HEK293 (cell line): ENCODE measurements at regions of chr15 and their contacts with region 1.

Region 1: GRCh38 chr15:79339564-79340314 is 28.8 kb downstream of the TMED3 start:
- H3K4me3 ChIP-seq: no peak overlapping the region
- H3K27ac ChIP-seq: no peak overlapping the region
- H3K4me1 ChIP-seq: no peaks in the 10 kb centered on the region
- CTCF ChIP-seq: peak; percentile 58; the same call in 1 of the 2 replicates

Region 2: GRCh38 chr15:79243723-79244122 is 96.0 kb before region 1 on chr15:
- CTCF ChIA-PET with region 1: no interaction called
- POLR2A ChIA-PET with region 1: no interaction called
- H3K4me3 ChIP-seq: no peak overlapping the region
- H3K27ac ChIP-seq: no peak overlapping the region
- H3K4me1 ChIP-seq: no peaks in the 10 kb centered on the region
- CTCF ChIP-seq: no peak

Region 3: DNA sequence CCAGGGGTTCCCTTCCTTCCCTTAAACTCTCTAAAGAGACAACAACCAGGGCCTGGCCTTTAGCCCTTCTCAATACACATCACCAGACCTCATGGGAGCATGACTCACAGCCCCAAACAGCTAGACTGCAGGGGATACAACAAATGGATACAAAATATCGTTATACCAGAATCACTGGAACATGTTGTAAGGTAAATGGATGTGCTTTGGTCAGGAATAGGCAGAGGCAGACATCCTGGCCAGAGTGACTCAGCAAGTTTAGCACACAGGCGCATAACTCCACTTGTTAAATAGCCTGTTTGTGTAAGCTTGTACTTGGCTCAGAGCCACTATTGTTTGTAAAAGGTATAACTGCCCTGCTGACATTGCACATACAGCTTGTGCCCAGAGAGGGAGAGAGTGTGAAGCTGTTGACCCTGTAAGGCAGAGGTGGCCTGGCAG is 10.5 kb before region 1 on chr15:
- CTCF ChIA-PET with region 1: interaction called, 16 read pairs
- POLR2A ChIA-PET with region 1: no interaction called
- H3K4me3 ChIP-seq: no peak overlapping the region
- H3K27ac ChIP-seq: no peak overlapping the region
- H3K4me1 ChIP-seq: no peaks in the 10 kb centered on the region
- CTCF ChIP-seq: no peak

Region 4: GRCh38 chr15:79442911-79443310 is 103.2 kb after region 1 on chr15:
- CTCF ChIA-PET with region 1: interaction called, 11 read pairs
- POLR2A ChIA-PET with region 1: no interaction called
- H3K4me3 ChIP-seq: no peak overlapping the region
- H3K27ac ChIP-seq: no peak overlapping the region
- H3K4me1 ChIP-seq: no peaks in the 10 kb centered on the region
- CTCF ChIP-seq: no peak

Region 5: DNA sequence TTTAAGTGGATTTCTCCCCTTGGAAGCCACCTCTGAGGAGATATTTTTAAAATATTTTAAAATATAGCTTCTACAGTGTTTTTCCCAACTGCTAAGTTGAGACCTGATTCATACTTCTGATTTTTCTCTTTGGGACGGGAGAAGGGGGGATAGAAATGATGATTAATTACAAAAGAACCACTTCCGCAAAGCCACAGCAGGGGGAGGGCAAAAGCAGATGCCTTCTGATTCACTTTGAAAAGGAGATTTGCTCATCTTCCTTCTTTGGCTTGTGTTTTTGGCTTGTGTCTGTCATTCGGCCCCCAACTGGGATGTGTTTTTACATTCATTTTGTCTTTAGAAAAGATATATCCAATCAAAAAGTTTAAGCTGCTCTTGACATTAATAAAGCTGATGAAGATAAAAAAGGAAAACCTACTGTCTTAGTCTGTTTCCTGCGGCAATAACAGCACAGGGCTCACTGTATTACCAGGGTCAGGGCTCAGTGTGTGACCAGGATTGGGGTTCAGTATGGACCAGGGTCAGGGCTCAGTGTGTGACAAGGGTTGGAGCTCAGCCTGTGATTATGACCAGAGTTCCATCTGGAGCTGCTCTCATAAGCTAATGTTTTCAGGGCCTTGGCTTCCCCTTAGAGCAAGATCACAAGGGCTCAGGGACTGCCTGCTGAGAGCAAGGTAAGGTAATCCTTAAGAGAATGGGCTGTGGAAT is 333.8 kb after region 1 on chr15:
- CTCF ChIA-PET with region 1: interaction called, 11 read pairs
- POLR2A ChIA-PET with region 1: no interaction called
- H3K4me3 ChIP-seq: no peak overlapping the region
- H3K27ac ChIP-seq: no peak overlapping the region
- H3K4me1 ChIP-seq: no peaks in the 10 kb centered on the region
- CTCF ChIP-seq: no peak

Region 6: GRCh38 chr15:79989682-79990081 is 649.9 kb after region 1 on chr15:
- CTCF ChIA-PET with region 1: interaction called, 18 read pairs
- POLR2A ChIA-PET with region 1: no interaction called
- H3K4me3 ChIP-seq: no peak overlapping the region
- H3K27ac ChIP-seq: no peak overlapping the region
- H3K4me1 ChIP-seq: no peaks in the 10 kb centered on the region
- CTCF ChIP-seq: no peak